ENCODE measurements at regions of chr16 and their contacts with region 1.

Region 1: DNA sequence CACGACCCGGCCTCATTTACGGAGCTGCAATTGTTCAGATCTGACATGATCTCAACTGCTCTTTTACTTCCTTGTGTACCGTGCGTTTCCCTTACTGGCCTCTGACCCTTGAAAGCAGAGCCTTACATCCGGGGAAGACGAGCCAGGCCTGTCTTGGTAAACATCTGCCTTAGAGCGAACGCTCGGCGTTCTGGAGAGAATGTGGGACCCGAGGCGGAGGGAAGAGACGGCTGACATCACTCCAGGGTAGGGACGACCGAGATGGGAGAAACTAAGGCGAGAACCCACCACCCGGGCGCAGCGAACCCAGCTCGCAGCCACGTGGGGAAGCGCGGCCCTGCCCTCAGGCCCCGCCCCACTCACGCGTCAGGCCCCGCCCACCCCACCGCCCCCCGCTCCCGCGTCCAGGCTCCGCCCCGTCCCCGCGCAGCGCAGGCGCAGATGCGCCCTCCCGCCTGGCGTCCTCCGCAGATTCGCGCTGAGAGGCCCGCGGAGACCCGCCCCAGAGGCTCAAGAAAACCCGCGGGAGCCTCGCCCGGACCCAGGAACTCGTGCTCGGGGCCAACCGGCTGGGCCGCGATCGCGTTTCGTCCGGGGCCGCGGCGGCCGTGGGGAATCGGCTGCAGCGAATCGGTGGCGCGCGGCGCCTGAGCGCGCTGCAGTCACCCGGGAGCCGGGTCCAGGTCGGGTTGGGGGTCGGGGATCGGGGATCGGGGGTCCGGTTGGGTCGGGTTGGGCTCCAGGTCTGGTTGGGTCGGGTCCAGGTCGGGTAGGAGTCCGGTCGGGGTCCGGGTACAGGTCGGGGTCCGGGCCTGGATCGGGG is at the start of gene TELO2:
- DNase-seq: peak; percentile 89
- H3K4me3 Mint-ChIP-seq: peak within 1 kb of the TSS; percentile 94
- H3K27ac Mint-ChIP-seq: peak within 1 kb of the TSS; percentile 94
- H3K4me1 Mint-ChIP-seq: peaks cover 20% of the 10 kb centered on the region
- H3K27me3 Mint-ChIP-seq: no peaks in the 10 kb centered on the region
- total RNA-seq, gene TELO2: 49.4 to 51.9 TPM

Region 2: GRCh38 chr16:1474796-1475551 is 18.2 kb before region 1 on chr16 and contains the start of gene CLCN7:
- CTCF ChIA-PET with region 1: no interaction called
- POLR2A ChIA-PET with region 1: interaction called, 22 read pairs
- DNase-seq: peak; percentile 92
- H3K4me3 Mint-ChIP-seq: peak within 1 kb of the TSS; percentile 81
- H3K27ac Mint-ChIP-seq: peak within 1 kb of the TSS; percentile 73
- H3K4me1 Mint-ChIP-seq: peaks cover 20% of the 10 kb centered on the region
- H3K27me3 Mint-ChIP-seq: no peaks in the 10 kb centered on the region
- total RNA-seq, gene CLCN7: 44.2 to 49.4 TPM

Region 3: DNA sequence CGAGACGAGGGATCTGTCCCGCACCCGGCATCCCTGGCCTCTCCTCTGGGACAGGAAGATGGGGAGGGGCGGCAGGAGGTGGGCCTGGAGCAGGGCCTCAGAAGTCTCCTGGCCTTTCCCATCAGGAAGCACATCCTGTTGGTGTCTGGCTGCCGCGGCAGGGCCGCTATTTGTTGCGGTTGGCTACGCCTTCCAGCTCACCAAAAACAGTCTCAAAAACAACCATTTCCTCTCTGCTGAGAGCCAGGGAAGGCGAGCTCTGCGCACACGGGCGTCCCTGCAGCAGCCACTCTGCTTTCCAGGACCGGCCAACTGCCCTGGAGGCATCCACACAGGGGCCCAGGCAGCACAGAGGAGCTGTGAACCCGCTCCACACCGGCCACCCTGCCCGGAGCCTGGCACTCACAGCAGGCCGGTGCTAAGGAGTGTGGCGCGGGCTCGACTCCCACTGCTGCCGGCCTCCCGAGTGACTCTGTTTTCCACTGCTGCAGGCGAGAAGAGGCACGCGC is 40.4 kb after region 1 on chr16 and contains the start of gene TMEM204:
- CTCF ChIA-PET with region 1: no interaction called
- POLR2A ChIA-PET with region 1: interaction called, 10 read pairs
- DNase-seq: peak; percentile 69
- H3K4me3 Mint-ChIP-seq: peak within 1 kb of the TSS; percentile 100
- H3K27ac Mint-ChIP-seq: peak within 1 kb of the TSS; percentile 92
- H3K4me1 Mint-ChIP-seq: peaks cover 43% of the 10 kb centered on the region
- H3K27me3 Mint-ChIP-seq: no peaks in the 10 kb centered on the region
- total RNA-seq, gene TMEM204: 42.9 to 43.5 TPM

Region 4: DNA sequence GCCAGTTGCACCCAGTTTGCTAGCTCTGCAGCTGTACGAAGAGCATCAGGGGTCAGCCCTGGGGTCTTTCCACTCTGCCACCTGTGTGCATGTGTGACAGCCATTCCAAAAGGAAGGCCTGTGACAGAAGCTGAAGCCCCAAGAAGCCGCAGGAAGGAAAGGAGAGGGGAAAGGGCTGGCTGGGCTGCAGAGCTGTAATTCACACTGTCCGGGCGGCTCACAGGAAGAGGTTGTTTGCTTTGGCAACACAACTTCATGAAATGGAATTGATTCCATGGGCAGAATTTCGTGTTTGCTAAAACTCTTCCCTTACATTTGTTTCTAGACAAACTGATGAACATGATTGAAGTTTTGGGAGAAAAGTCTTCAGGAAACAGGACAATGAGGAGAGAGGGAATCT is 55.1 kb after region 1 on chr16:
- CTCF ChIA-PET with region 1: no interaction called
- POLR2A ChIA-PET with region 1: no interaction called
- DNase-seq: no peak
- H3K4me3 Mint-ChIP-seq: no peak overlapping the region
- H3K27ac Mint-ChIP-seq: no peak overlapping the region
- H3K4me1 Mint-ChIP-seq: peaks cover 34% of the 10 kb centered on the region
- H3K27me3 Mint-ChIP-seq: no peaks in the 10 kb centered on the region

Region 5: GRCh38 chr16:1597154-1597553 is 104.0 kb after region 1 on chr16:
- CTCF ChIA-PET with region 1: no interaction called
- POLR2A ChIA-PET with region 1: no interaction called
- DNase-seq: no peak
- H3K4me3 Mint-ChIP-seq: no peak overlapping the region
- H3K27ac Mint-ChIP-seq: no peak overlapping the region
- H3K4me1 Mint-ChIP-seq: no peaks in the 10 kb centered on the region
- H3K27me3 Mint-ChIP-seq: no peaks in the 10 kb centered on the region

Measured in activated CD4-positive, alpha-beta memory T cell treated with anti-CD3 and anti-CD28 coated beads, Interleukin-2, amount 10 ng/mL, durations not matched to agents 7 days and 5 days (primary cell).